ENCODE measurements at regions of chr18 and their contacts with region 1.

Region 1: GRCh38 chr18:8478166-8478967 is 130.9 kb upstream of the RAB12 start:
- DNase-seq: peak; percentile 40
- ATAC-seq: peak; percentile 94
- H3K4me3 ChIP-seq: no peak overlapping the region
- H3K27ac ChIP-seq: no peak overlapping the region
- H3K4me1 ChIP-seq: no peaks in the 10 kb centered on the region
- H3K27me3 ChIP-seq: peaks cover 3 to 38% of the 10 kb centered on the region in 2 experiments; a peak in 4 of 5 replicates
- CTCF ChIP-seq: peak; percentile 77
- EP300 ChIP-seq: no peak
- POLR2A ChIP-seq: no peak
- RAD21 ChIP-seq: no peak

Region 2: DNA sequence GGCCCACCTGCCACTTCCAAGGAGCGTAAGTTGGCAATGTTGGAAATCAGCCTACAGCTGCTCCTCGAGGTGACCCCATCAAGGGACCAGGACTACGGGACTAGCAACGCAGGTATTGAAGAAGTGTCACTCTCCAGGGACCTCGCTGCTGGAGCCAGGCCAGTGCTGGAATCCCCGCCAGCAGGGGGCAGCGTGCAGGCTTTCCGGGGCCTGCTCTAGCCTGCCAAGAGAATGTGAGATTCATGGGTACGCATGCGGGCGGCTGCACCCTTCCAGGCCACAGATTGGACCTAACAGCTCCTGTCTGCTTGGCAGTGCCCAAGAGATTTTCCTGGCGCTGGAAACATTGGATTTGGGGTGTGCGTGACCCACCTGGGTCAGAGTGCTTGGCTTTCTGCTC is 52.0 kb before region 1 on chr18:
- CTCF ChIA-PET with region 1: no interaction called
- POLR2A ChIA-PET with region 1: no interaction called
- in situ Hi-C with region 1: no loop called
- intact Hi-C with region 1: loop called (anchors 1 kb)
- DNase-seq: peak; percentile 24
- ATAC-seq: peak; percentile 89
- H3K4me3 ChIP-seq: no peak overlapping the region
- H3K27ac ChIP-seq: no peak overlapping the region
- H3K4me1 ChIP-seq: peaks cover 11% of the 10 kb centered on the region; the same call in 1 of the 2 replicates
- H3K27me3 ChIP-seq: peaks cover 2 to 3% of the 10 kb centered on the region in 2 experiments; a peak in 2 of 5 replicates
- CTCF ChIP-seq: peak; percentile 72
- EP300 ChIP-seq: no peak
- POLR2A ChIP-seq: no peak
- RAD21 ChIP-seq: peak; percentile 54

Region 3: GRCh38 chr18:8643326-8643878 is 165.0 kb after region 1 on chr18:
- CTCF ChIA-PET with region 1: no interaction called
- POLR2A ChIA-PET with region 1: no interaction called
- in situ Hi-C with region 1: no loop called
- intact Hi-C with region 1: no loop called
- DNase-seq: no peak
- ATAC-seq: no peak
- H3K4me3 ChIP-seq: no peak overlapping the region
- H3K27ac ChIP-seq: no peak overlapping the region
- H3K4me1 ChIP-seq: no peaks in the 10 kb centered on the region; the same call in 1 of the 2 replicates
- H3K27me3 ChIP-seq: no peaks in the 10 kb centered on the region
- CTCF ChIP-seq: no peak
- EP300 ChIP-seq: no peak
- POLR2A ChIP-seq: no peak
- RAD21 ChIP-seq: no peak

Measured in HepG2 (cell line).